Activated CD4-positive, alpha-beta T cell treated with anti-CD3 and anti-CD28 coated beads for 36 hours (primary cell): ENCODE measurements at regions of chr3 and their contacts with region 1.

Region 1: GRCh38 chr3:190513409-190514162 is at the start of gene IL1RAP:
- DNase-seq: peak; percentile 92
- ATAC-seq: peak; percentile 94
- H3K4me3 Mint-ChIP-seq: peak within 1 kb of the TSS; percentile 85
- H3K27ac Mint-ChIP-seq: peak within 1 kb of the TSS; percentile 77
- H3K4me1 Mint-ChIP-seq: peaks cover 36% of the 10 kb centered on the region
- H3K27me3 Mint-ChIP-seq: no peaks in the 10 kb centered on the region
- total RNA-seq, gene IL1RAP: 12.1 to 16.1 TPM

Region 2: GRCh38 chr3:189961525-189962161 is 551.9 kb before region 1 on chr3:
- CTCF ChIA-PET with region 1: no interaction called
- POLR2A ChIA-PET with region 1: no interaction called
- intact Hi-C with region 1: loop called in 1 of 2 experiments (anchors 10 kb)
- DNase-seq: peak; percentile 85
- ATAC-seq: peak; percentile 78
- H3K4me3 Mint-ChIP-seq: no peak overlapping the region
- H3K27ac Mint-ChIP-seq: no peak overlapping the region
- H3K4me1 Mint-ChIP-seq: peaks cover 8% of the 10 kb centered on the region
- H3K27me3 Mint-ChIP-seq: peaks cover 7% of the 10 kb centered on the region

Region 3: GRCh38 chr3:190491533-190492054 is 22.0 kb before region 1 on chr3:
- CTCF ChIA-PET with region 1: interaction called, 8 read pairs
- POLR2A ChIA-PET with region 1: interaction called, 3 read pairs
- intact Hi-C with region 1: loop called (anchors 1 kb)
- DNase-seq: peak; percentile 41
- ATAC-seq: peak; percentile 94
- H3K4me3 Mint-ChIP-seq: no peak overlapping the region
- H3K27ac Mint-ChIP-seq: no peak overlapping the region
- H3K4me1 Mint-ChIP-seq: peaks cover 23% of the 10 kb centered on the region
- H3K27me3 Mint-ChIP-seq: peaks cover 57% of the 10 kb centered on the region

Region 4: DNA sequence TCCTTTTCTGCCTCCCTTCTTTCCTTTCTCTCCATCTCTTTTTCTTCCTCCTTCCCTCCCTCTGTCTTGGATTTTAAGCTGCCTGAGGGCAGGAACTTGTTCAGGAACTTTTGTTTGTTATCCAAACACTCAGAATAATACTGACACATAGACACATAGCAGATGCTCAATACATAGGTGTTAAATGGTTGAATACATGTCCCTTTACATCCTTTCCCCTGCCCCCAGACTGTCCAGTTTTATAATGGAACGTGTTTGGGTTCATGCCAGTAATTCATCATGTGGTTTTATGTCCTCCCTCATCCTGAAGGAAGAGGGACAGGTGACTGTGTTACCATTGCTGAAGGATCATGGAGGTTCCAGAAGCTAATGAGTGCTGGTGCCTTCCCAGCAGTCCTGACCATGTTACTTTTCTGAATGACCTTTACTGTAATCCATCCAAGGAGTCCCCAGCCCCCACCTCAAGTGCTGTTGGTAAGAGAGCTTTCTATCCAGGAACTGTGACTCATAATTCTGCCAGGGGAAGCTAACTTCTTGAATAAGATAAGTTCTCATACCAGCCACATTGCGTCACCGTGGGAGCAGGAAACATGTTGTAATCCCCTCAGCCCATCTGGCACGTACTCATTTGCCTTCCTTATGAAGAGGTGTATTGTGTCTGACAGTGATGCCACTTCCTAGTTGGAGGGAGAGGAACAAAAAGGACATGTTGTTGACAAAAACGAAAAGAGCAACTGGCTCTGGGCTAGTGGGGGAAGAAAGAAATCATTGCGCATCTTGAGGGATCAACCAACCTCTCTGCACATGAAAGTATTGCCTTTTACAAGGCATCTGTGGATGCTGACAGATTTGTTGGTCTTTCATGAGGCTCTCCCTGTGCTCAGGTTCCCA is 52.7 kb after region 1 on chr3:
- CTCF ChIA-PET with region 1: interaction called, 3 read pairs
- POLR2A ChIA-PET with region 1: interaction called, 6 read pairs
- intact Hi-C with region 1: loop called (anchors 1 kb)
- DNase-seq: peak; percentile 92
- ATAC-seq: peak; percentile 88
- H3K4me3 Mint-ChIP-seq: no peak overlapping the region
- H3K27ac Mint-ChIP-seq: peak overlapping the region; percentile 97
- H3K4me1 Mint-ChIP-seq: peaks cover 61% of the 10 kb centered on the region
- H3K27me3 Mint-ChIP-seq: no peaks in the 10 kb centered on the region

Region 5: DNA sequence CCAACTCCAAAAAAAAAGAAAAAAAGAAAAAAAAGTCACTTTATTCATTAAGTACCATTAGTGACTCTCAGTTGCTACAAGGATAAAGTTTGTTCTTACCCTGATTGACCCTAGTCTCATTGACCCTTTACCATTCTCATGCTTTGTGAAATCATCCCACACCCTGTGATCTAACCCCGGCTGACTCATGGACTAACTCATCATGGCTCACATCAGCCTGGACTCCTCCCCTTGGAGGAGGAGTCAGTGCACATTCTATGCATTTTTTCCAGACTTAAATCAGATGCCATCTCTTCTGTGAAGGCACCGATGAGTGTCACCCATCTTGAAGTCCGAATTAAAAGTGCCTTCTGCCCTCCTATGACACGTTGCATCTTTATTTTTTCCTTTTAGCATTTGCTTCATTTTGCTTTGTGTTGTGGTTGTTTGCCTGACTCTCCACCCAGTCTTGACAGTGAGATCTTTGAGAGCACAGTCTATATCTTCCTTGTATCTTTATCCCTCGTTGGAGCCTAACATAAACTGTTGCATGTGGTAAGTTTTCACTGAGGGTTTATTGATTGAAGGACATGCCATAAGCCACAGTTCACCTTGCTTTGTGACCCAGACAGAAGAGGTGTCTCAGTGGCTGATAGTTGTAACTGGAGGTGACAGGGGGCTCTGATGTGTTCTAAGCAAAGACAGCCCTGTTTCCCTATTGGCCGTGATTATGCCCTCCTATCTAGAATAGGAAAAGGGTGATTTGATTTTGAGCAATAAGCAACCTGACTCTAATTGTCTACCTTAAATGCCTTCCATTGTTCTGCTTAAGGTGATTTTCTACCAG is 72.4 kb after region 1 on chr3:
- CTCF ChIA-PET with region 1: no interaction called
- POLR2A ChIA-PET with region 1: no interaction called
- intact Hi-C with region 1: loop called in 1 of 2 experiments (anchors 1 kb)
- DNase-seq: peak; percentile 82
- ATAC-seq: peak; percentile 87
- H3K4me3 Mint-ChIP-seq: peak overlapping the region; percentile 51
- H3K27ac Mint-ChIP-seq: peak overlapping the region; percentile 96
- H3K4me1 Mint-ChIP-seq: peaks cover 41% of the 10 kb centered on the region
- H3K27me3 Mint-ChIP-seq: no peaks in the 10 kb centered on the region

Region 6: DNA sequence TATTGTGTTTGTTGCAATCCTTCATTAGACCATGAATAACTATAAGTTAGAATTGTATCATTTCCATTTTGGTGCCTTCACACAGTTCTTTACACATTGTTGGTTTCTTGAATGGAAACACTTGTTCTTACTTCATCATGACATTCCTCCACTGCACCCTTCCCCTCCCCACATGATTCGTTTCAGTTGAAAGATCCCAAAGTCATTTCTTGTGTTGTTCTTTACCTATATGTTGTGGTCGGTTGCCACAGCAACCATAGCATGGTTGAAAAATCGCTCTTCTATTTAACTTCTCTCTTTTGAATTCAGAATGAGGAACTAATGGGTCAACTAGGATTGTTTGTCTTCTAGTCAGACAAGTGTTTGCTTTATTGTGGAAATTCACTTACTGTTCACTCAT is 103.6 kb after region 1 on chr3:
- CTCF ChIA-PET with region 1: interaction called, 4 read pairs
- POLR2A ChIA-PET with region 1: interaction called, 15 read pairs
- intact Hi-C with region 1: loop called (anchors 1 to 2 kb)
- DNase-seq: peak; percentile 69
- ATAC-seq: peak; percentile 48
- H3K4me3 Mint-ChIP-seq: no peak overlapping the region
- H3K27ac Mint-ChIP-seq: peak overlapping the region; percentile 91
- H3K4me1 Mint-ChIP-seq: peaks cover 66% of the 10 kb centered on the region
- H3K27me3 Mint-ChIP-seq: no peaks in the 10 kb centered on the region

Region 7: GRCh38 chr3:190701096-190701532 is 187.5 kb after region 1 on chr3:
- CTCF ChIA-PET with region 1: interaction called, 3 read pairs
- POLR2A ChIA-PET with region 1: no interaction called
- intact Hi-C with region 1: loop called (anchors 5 to 10 kb)
- DNase-seq: peak; percentile 37
- ATAC-seq: peak; percentile 36
- H3K4me3 Mint-ChIP-seq: no peak overlapping the region
- H3K27ac Mint-ChIP-seq: no peak overlapping the region
- H3K4me1 Mint-ChIP-seq: no peaks in the 10 kb centered on the region
- H3K27me3 Mint-ChIP-seq: peaks cover 25% of the 10 kb centered on the region

Region 8: GRCh38 chr3:190983875-190984274 is 470.3 kb after region 1 on chr3:
- CTCF ChIA-PET with region 1: no interaction called
- POLR2A ChIA-PET with region 1: no interaction called
- intact Hi-C with region 1: no loop called
- DNase-seq: no peak
- ATAC-seq: no peak
- H3K4me3 Mint-ChIP-seq: no peak overlapping the region
- H3K27ac Mint-ChIP-seq: no peak overlapping the region
- H3K4me1 Mint-ChIP-seq: no peaks in the 10 kb centered on the region
- H3K27me3 Mint-ChIP-seq: no peaks in the 10 kb centered on the region